CD4-positive, alpha-beta memory T cell (primary cell): ENCODE measurements at regions of chr13 and their contacts with region 1.

Region 1: DNA sequence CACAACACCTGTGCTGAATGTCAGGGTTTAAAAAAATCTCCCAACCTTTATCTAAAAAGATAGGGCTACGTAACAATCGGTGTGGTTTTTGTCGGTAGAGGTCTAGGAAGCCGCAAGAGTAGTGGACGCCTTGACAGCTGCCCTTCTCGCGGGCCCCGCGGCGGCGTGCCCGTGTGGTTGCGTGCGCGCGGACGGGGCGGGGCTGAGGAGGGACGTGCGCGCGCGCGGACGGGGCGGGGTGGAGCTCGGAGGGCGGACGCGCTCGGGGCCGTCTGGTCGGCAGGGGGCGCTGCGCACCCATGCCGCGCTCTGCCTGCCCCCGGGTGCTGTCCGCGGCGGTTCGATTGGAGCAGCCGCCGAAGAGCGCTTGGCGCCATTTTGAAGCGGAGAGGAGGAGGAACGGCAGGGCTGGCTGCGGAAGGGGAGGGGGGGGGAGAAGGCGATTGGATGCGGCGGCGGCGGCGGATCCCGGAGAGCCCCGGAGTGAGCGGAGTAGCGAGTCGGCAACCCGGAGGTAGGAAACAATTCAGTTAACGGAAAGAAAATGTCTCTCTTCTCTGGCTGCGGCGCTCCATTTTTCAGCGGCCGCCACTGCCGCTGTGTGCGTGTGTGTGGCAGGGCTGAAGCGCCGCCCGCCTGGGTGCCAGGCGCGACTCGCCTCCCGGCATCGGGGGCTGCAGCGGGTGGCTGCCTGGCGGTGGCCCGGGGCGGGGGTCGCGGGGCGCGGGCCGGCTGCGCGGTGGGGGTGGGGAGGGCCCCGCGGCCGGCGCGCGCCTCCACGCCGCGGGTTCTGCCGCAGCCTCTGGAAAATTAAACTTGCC is at the start of gene PDS5B:
- DNase-seq: peak; percentile 96 to 98 (median 96)
- H3K4me3 ChIP-seq: peak within 1 kb of the TSS; percentile 62 to 93
- H3K4me3 Mint-ChIP-seq: peak within 1 kb of the TSS; percentile 90 to 99 (median 96)
- H3K27ac ChIP-seq: peak within 1 kb of the TSS; percentile 68
- H3K27ac Mint-ChIP-seq: peak within 1 kb of the TSS; percentile 94 to 98 (median 96)
- H3K4me1 ChIP-seq: peaks cover 39% of the 10 kb centered on the region
- H3K4me1 Mint-ChIP-seq: peaks cover 27 to 46% (median 37%) of the 10 kb centered on the region in 4 donors
- H3K27me3 ChIP-seq: no peaks in the 10 kb centered on the region
- H3K27me3 Mint-ChIP-seq: no peaks in the 10 kb centered on the region
- total RNA-seq, gene PDS5B: 56.1 to 56.3 TPM

Region 2: GRCh38 chr13:32427852-32428580 is 158.3 kb before region 1 on chr13 and contains the start of gene N4BP2L1:
- CTCF ChIA-PET with region 1: interaction called, 4 read pairs
- POLR2A ChIA-PET with region 1: interaction called, 4 read pairs
- intact Hi-C with region 1: loop called (anchors 1 kb)
- DNase-seq: peak; percentile 80 to 94 (median 82)
- H3K4me3 ChIP-seq: peak within 1 kb of the TSS; percentile 77 to 85
- H3K4me3 Mint-ChIP-seq: peak within 1 kb of the TSS; percentile 94 to 99 (median 96)
- H3K27ac ChIP-seq: peak within 1 kb of the TSS; percentile 84
- H3K27ac Mint-ChIP-seq: peak within 1 kb of the TSS; percentile 96 to 99 (median 98)
- H3K4me1 ChIP-seq: peaks cover 46% of the 10 kb centered on the region
- H3K4me1 Mint-ChIP-seq: peaks cover 27 to 54% (median 40%) of the 10 kb centered on the region in 4 donors
- H3K27me3 ChIP-seq: no peaks in the 10 kb centered on the region
- H3K27me3 Mint-ChIP-seq: no peaks in the 10 kb centered on the region
- total RNA-seq, gene N4BP2L1: 51.6 to 51.9 TPM

Region 3: DNA sequence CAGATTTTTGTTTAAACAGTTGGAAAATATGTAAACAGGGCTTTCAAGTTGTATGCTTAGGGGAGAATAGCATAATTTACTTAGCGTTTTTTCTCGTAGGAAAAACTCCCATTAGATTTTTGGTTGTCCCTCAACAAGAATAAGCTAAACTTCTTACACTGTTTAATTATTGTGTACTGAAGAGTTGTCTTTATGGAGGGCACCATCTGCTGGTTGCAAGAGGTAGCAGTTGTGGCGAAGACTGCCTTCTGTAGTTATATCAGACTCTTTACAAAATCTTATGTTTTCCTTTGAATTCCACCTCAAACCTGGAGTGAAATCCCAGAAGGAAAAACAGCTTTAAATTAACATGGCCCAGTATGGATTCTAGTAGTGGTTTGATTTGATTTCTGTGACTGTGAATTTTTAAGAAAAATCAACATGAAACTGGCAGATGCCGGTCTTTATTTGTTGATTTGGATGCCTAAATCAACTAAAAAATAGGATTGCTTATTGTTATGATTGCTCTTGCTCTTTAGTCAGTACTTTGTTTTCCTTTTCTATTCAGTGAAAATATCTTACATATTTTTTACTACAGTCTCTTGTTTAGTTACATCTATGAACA is 53.3 kb after region 1 on chr13:
- CTCF ChIA-PET with region 1: interaction called, 90 read pairs
- POLR2A ChIA-PET with region 1: interaction called, 11 read pairs
- intact Hi-C with region 1: loop called (anchors 1 kb)
- DNase-seq: peak; percentile 46 to 59 (median 56)
- H3K4me3 ChIP-seq: no peak overlapping the region
- H3K4me3 Mint-ChIP-seq: no peak overlapping the region
- H3K27ac ChIP-seq: no peak overlapping the region
- H3K27ac Mint-ChIP-seq: no peak overlapping the region
- H3K4me1 ChIP-seq: peaks cover 7% of the 10 kb centered on the region
- H3K4me1 Mint-ChIP-seq: peaks cover 19 to 33% (median 28%) of the 10 kb centered on the region in 4 donors
- H3K27me3 ChIP-seq: no peaks in the 10 kb centered on the region
- H3K27me3 Mint-ChIP-seq: no peaks in the 10 kb centered on the region

Region 4: DNA sequence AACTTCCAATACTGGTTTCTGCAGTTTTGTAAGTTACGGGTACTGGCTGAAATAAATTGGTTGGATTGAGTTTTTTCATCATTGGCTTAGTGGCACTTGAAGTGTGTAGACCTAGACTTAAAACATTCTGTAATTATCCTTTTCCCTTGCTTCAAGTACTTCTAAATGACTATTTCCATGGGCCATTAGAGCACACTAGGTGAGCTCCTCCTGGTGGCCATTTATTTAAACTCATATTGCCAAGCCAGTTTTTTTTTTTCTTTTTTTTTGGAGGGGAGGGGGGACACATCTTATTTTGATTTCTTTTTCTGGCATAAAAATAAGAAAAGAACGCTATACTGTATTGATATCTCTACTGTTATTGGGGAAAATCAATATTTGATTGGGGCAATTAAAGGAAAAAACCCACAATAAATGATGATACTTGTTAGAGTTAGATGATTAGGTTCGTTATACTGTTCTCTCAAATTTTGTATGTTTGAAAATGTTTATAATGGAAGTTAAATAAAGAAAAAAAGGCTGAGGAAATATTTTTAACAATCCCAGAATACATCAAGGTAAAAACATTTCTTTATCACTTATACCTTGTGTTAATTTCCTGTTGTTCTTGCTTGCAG is 82.8 kb after region 1 on chr13:
- CTCF ChIA-PET with region 1: interaction called, 12 read pairs
- POLR2A ChIA-PET with region 1: interaction called, 6 read pairs
- intact Hi-C with region 1: loop called (anchors 1 kb)
- DNase-seq: peak; percentile 35 to 45 (median 40)
- H3K4me3 ChIP-seq: no peak overlapping the region
- H3K4me3 Mint-ChIP-seq: no peak overlapping the region
- H3K27ac ChIP-seq: no peak overlapping the region
- H3K27ac Mint-ChIP-seq: peak overlapping the region in 1 of 7 donors; percentile 21
- H3K4me1 ChIP-seq: no peaks in the 10 kb centered on the region
- H3K4me1 Mint-ChIP-seq: peaks cover 4 to 9% (median 5%) of the 10 kb centered on the region in 4 donors
- H3K27me3 ChIP-seq: no peaks in the 10 kb centered on the region
- H3K27me3 Mint-ChIP-seq: no peaks in the 10 kb centered on the region

Region 5: GRCh38 chr13:32984846-32985544 is 398.7 kb after region 1 on chr13:
- CTCF ChIA-PET with region 1: no interaction called
- POLR2A ChIA-PET with region 1: no interaction called
- intact Hi-C with region 1: no loop called
- DNase-seq: no peak
- H3K4me3 ChIP-seq: no peak overlapping the region
- H3K4me3 Mint-ChIP-seq: no peak overlapping the region
- H3K27ac ChIP-seq: no peak overlapping the region
- H3K27ac Mint-ChIP-seq: no peak overlapping the region
- H3K4me1 ChIP-seq: no peaks in the 10 kb centered on the region
- H3K4me1 Mint-ChIP-seq: peaks cover 0 to 6% (median 1%) of the 10 kb centered on the region in 4 donors
- H3K27me3 ChIP-seq: no peaks in the 10 kb centered on the region
- H3K27me3 Mint-ChIP-seq: peaks cover 0 to 2% of the 10 kb centered on the region in 2 donors

Region 6: GRCh38 chr13:33228648-33229445 is 642.6 kb after region 1 on chr13:
- CTCF ChIA-PET with region 1: no interaction called
- POLR2A ChIA-PET with region 1: no interaction called
- intact Hi-C with region 1: loop called (anchors 5 kb)
- DNase-seq: peak in 4 of 5 donors; percentile 38 to 48 (median 42)
- H3K4me3 ChIP-seq: no peak overlapping the region
- H3K4me3 Mint-ChIP-seq: peak overlapping the region in 1 of 8 donors; percentile 26
- H3K27ac ChIP-seq: no peak overlapping the region
- H3K27ac Mint-ChIP-seq: peak overlapping the region in 1 of 7 donors; percentile 7
- H3K4me1 ChIP-seq: peaks cover 3% of the 10 kb centered on the region
- H3K4me1 Mint-ChIP-seq: peaks cover 0 to 5% (median 1%) of the 10 kb centered on the region in 4 donors
- H3K27me3 ChIP-seq: no peaks in the 10 kb centered on the region
- H3K27me3 Mint-ChIP-seq: peaks cover 0 to 4% of the 10 kb centered on the region in 2 donors

Region 7: DNA sequence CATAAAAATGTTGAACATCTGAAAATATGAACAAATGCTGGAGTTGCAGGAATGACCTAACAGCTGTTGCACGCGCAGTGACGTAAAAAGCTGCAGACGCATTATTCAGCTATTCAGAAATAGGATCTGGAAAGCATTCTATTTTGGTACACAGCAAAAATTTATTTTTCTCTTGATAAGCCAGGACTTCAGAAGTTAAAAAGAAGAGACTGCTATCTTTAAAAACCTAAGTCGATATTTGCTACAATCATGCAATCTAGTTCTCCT is 736.2 kb after region 1 on chr13:
- CTCF ChIA-PET with region 1: no interaction called
- POLR2A ChIA-PET with region 1: no interaction called
- intact Hi-C with region 1: no loop called
- DNase-seq: no peak
- H3K4me3 ChIP-seq: no peak overlapping the region
- H3K4me3 Mint-ChIP-seq: no peak overlapping the region
- H3K27ac ChIP-seq: no peak overlapping the region
- H3K27ac Mint-ChIP-seq: no peak overlapping the region
- H3K4me1 ChIP-seq: no peaks in the 10 kb centered on the region
- H3K4me1 Mint-ChIP-seq: peaks cover 0 to 2% (median 0%) of the 10 kb centered on the region in 4 donors
- H3K27me3 ChIP-seq: no peaks in the 10 kb centered on the region
- H3K27me3 Mint-ChIP-seq: peaks cover 0 to 3% of the 10 kb centered on the region in 2 donors

Region 8: GRCh38 chr13:33610471-33611015 is 1024.3 kb after region 1 on chr13:
- CTCF ChIA-PET with region 1: no interaction called
- POLR2A ChIA-PET with region 1: no interaction called
- intact Hi-C with region 1: loop called (anchors 2 kb)
- DNase-seq: peak; percentile 54 to 74 (median 62)
- H3K4me3 ChIP-seq: peak overlapping the region in 1 of 2 donors; percentile 46
- H3K4me3 Mint-ChIP-seq: peak overlapping the region; percentile 85 to 94 (median 89)
- H3K27ac ChIP-seq: peak overlapping the region; percentile 36
- H3K27ac Mint-ChIP-seq: peak overlapping the region; percentile 80 to 96 (median 94)
- H3K4me1 ChIP-seq: peaks cover 33% of the 10 kb centered on the region
- H3K4me1 Mint-ChIP-seq: peaks cover 20 to 35% (median 31%) of the 10 kb centered on the region in 4 donors
- H3K27me3 ChIP-seq: no peaks in the 10 kb centered on the region
- H3K27me3 Mint-ChIP-seq: no peaks in the 10 kb centered on the region

Region 9: GRCh38 chr13:33817901-33818706 is 1231.8 kb after region 1 on chr13 and contains the start of gene RFC3:
- CTCF ChIA-PET with region 1: no interaction called
- POLR2A ChIA-PET with region 1: no interaction called
- intact Hi-C with region 1: loop called (anchors 1 kb)
- DNase-seq: peak; percentile 88 to 91 (median 89)
- H3K4me3 ChIP-seq: peak within 1 kb of the TSS; percentile 53 to 95
- H3K4me3 Mint-ChIP-seq: peak within 1 kb of the TSS; percentile 89 to 97 (median 91)
- H3K27ac ChIP-seq: peak within 1 kb of the TSS; percentile 55
- H3K27ac Mint-ChIP-seq: peak within 1 kb of the TSS; percentile 90 to 98 (median 94)
- H3K4me1 ChIP-seq: peaks cover 14% of the 10 kb centered on the region
- H3K4me1 Mint-ChIP-seq: peaks cover 6 to 21% (median 12%) of the 10 kb centered on the region in 4 donors
- H3K27me3 ChIP-seq: no peaks in the 10 kb centered on the region
- H3K27me3 Mint-ChIP-seq: peaks cover 0 to 1% of the 10 kb centered on the region in 2 donors
- total RNA-seq, gene RFC3: 4.9 to 5.1 TPM